T-cell (primary cell): ENCODE measurements at regions of chrX and their contacts with region 1.

Region 1: GRCh38 chrX:53422086-53422860 is at the start of gene SMC1A:
- DNase-seq: peak; percentile 89 to 100 (median 96)
- ATAC-seq: peak; percentile 85 to 93 (median 91)
- H3K4me3 ChIP-seq: peak within 1 kb of the TSS; percentile 77 to 84
- H3K4me3 Mint-ChIP-seq: peak within 1 kb of the TSS; percentile 89 to 99 (median 89)
- H3K27ac ChIP-seq: peak within 1 kb of the TSS; percentile 94
- H3K27ac Mint-ChIP-seq: peak within 1 kb of the TSS; percentile 93 to 95
- H3K4me1 ChIP-seq: peaks cover 17 to 35% of the 10 kb centered on the region in 2 experiments
- H3K4me1 Mint-ChIP-seq: peaks cover 36 to 37% (median 36%) of the 10 kb centered on the region in 3 donors
- H3K27me3 ChIP-seq: no peaks in the 10 kb centered on the region
- H3K27me3 Mint-ChIP-seq: no peaks in the 10 kb centered on the region
- total RNA-seq, gene SMC1A: 46.8 to 73.0 (median 66.0) TPM

Region 2: GRCh38 chrX:53163436-53163835 is 258.8 kb before region 1 on chrX:
- CTCF ChIA-PET with region 1: no interaction called
- POLR2A ChIA-PET with region 1: no interaction called
- DNase-seq: no peak
- ATAC-seq: no peak
- H3K4me3 ChIP-seq: no peak overlapping the region
- H3K4me3 Mint-ChIP-seq: no peak overlapping the region
- H3K27ac ChIP-seq: no peak overlapping the region
- H3K27ac Mint-ChIP-seq: no peak overlapping the region
- H3K4me1 ChIP-seq: no peaks in the 10 kb centered on the region
- H3K4me1 Mint-ChIP-seq: peaks cover 0 to 2% (median 0%) of the 10 kb centered on the region in 3 donors
- H3K27me3 ChIP-seq: no peaks in the 10 kb centered on the region
- H3K27me3 Mint-ChIP-seq: no peaks in the 10 kb centered on the region

Region 3: DNA sequence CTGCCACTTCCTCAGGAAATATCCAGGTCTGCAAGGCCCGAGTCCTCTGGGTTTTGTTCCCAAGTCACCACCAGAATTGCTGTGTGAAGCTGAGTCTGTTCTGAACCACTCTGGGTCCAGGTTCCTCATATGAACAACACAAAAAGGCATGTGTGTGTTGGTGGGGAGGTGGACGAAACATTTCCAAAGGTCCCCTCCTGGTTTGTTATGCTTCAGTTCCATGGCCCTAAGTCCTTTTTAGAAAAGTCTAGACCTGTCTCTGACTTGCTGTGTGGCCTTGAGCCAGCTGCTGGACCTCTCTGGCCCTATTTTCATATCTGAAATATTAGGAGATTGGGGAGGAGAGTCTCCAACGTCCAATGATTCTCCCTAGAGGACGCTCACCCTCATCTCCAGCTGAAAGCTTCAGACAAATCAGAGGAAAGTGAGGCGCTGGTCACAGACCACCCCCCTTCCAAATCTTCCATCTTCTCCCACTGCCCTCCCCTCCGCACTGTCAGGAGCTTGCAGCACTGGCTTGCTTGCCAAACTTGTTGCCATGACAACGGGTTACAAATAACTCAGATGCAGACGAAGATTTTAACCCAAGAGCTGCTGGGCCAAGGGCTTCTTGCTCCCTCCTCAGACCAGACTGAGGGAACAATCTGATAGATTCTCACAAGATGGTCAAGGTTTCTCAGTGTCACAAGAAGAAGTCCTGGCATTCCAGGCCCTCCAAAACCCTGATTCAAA is 64.3 kb before region 1 on chrX:
- CTCF ChIA-PET with region 1: no interaction called
- POLR2A ChIA-PET with region 1: no interaction called
- DNase-seq: no peak
- ATAC-seq: no peak
- H3K4me3 ChIP-seq: no peak overlapping the region
- H3K4me3 Mint-ChIP-seq: no peak overlapping the region
- H3K27ac ChIP-seq: no peak overlapping the region
- H3K27ac Mint-ChIP-seq: no peak overlapping the region
- H3K4me1 ChIP-seq: no peaks in the 10 kb centered on the region
- H3K4me1 Mint-ChIP-seq: peaks cover 0 to 5% (median 0%) of the 10 kb centered on the region in 3 donors
- H3K27me3 ChIP-seq: no peaks in the 10 kb centered on the region
- H3K27me3 Mint-ChIP-seq: peaks cover 0 to 10% of the 10 kb centered on the region in 2 donors

Region 4: GRCh38 chrX:53435997-53436396 is 13.7 kb after region 1 on chrX:
- CTCF ChIA-PET with region 1: interaction called, 4 to 11 read pairs
- POLR2A ChIA-PET with region 1: interaction called, 4 read pairs
- DNase-seq: peak; percentile 22 to 78 (median 47)
- ATAC-seq: peak; percentile 62 to 72 (median 68)
- H3K4me3 ChIP-seq: no peak overlapping the region
- H3K4me3 Mint-ChIP-seq: no peak overlapping the region
- H3K27ac ChIP-seq: no peak overlapping the region
- H3K27ac Mint-ChIP-seq: no peak overlapping the region
- H3K4me1 ChIP-seq: peaks cover 4 to 20% of the 10 kb centered on the region in 2 experiments
- H3K4me1 Mint-ChIP-seq: peaks cover 20 to 30% (median 28%) of the 10 kb centered on the region in 3 donors
- H3K27me3 ChIP-seq: peaks cover 0 to 6% of the 10 kb centered on the region in 2 experiments
- H3K27me3 Mint-ChIP-seq: peaks cover 5 to 26% of the 10 kb centered on the region in 2 donors